ENCODE measurements at regions of chr10 and their contacts with region 1.

Region 1: DNA sequence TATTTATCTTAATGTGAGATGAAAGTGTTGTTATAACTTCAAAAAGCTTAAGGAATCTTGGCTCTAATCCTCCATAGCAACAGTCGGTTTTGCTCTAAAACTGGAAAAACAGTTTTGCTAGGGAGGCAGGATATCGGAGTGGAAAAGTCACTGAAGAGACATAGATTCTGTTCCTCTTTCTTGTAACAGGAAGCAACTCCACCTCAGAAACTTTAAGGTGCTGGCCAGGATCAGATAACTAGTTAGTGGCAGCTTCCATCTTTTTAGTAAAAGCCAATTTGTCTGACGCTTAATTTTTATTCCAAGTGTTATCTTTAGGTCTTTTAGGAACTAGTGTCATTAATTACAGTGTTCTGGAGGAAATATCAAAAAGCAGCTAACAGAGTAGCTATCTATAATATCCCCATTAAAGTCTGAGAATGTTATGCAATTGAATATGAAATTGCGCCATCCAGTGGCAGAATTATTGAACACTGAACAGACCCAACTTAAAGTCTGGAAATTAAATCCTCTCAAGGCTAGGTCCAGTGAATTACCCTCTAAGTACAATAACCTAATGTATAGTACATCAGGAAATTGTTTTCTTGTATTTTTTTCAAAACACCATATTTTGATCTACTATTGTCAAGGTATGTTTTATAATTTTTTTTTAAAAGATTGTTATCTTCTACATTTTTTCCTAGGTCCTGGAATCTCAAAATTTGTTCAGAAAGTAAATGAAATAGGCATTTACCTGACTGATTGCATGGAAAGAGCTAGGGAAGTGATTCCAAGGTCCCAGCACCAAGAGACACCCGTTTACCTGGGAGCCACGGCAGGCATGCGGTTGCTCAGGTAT is 65.9 kb upstream of the CC2D2B start:
- DNase-seq: peak; percentile 84
- H3K4me3 ChIP-seq: no peak overlapping the region
- H3K27ac ChIP-seq: peak overlapping the region; percentile 22
- H3K4me1 ChIP-seq: peaks cover 7% of the 10 kb centered on the region
- H3K27me3 ChIP-seq: no peaks in the 10 kb centered on the region
- CTCF ChIP-seq: peak; percentile 39 to 44
- POLR2A ChIP-seq: no peak

Region 2: GRCh38 chr10:95374597-95375209 is 467.2 kb before region 1 on chr10:
- CTCF ChIA-PET with region 1: interaction called, 17 read pairs
- POLR2A ChIA-PET with region 1: no interaction called
- dilution Hi-C with region 1: no loop called
- intact Hi-C with region 1: loop called (anchors 5 kb)
- DNase-seq: peak; percentile 50
- H3K4me3 ChIP-seq: no peak overlapping the region
- H3K27ac ChIP-seq: no peak overlapping the region
- H3K4me1 ChIP-seq: no peaks in the 10 kb centered on the region
- H3K27me3 ChIP-seq: peaks cover 0 to 7% of the 10 kb centered on the region in 2 experiments
- CTCF ChIP-seq: peak; percentile 83 to 91
- POLR2A ChIP-seq: no peak

Region 3: GRCh38 chr10:95706986-95707385 is 134.9 kb before region 1 on chr10:
- CTCF ChIA-PET with region 1: interaction called, 20 read pairs
- POLR2A ChIA-PET with region 1: no interaction called
- dilution Hi-C with region 1: no loop called
- intact Hi-C with region 1: no loop called
- DNase-seq: no peak
- H3K4me3 ChIP-seq: no peak overlapping the region
- H3K27ac ChIP-seq: no peak overlapping the region
- H3K4me1 ChIP-seq: no peaks in the 10 kb centered on the region
- H3K27me3 ChIP-seq: no peaks in the 10 kb centered on the region
- CTCF ChIP-seq: no peak
- POLR2A ChIP-seq: no peak

Region 4: DNA sequence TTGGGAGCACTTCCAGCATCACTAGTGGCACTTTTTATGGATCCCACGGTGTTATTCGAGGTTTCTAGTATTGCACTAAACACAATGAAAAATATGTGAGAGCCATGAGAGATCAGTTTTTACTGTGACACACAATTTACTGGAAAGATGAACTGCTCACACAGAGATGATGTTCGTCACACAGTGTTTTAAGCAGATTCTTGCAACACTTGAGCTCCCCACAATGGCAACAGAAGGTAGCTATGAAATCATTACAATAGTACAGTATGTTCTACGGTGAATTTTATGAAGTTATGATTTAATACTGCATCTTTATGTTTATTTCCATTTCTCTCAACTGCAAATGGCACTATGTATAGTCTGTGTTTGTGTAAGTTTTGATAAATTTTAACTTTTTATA is 113.4 kb before region 1 on chr10:
- CTCF ChIA-PET with region 1: interaction called, 30 read pairs
- POLR2A ChIA-PET with region 1: no interaction called
- dilution Hi-C with region 1: no loop called
- intact Hi-C with region 1: no loop called
- DNase-seq: peak; percentile 54
- H3K4me3 ChIP-seq: no peak overlapping the region
- H3K27ac ChIP-seq: no peak overlapping the region
- H3K4me1 ChIP-seq: peaks cover 15% of the 10 kb centered on the region
- H3K27me3 ChIP-seq: no peaks in the 10 kb centered on the region
- CTCF ChIP-seq: no peak
- POLR2A ChIP-seq: no peak

Region 5: DNA sequence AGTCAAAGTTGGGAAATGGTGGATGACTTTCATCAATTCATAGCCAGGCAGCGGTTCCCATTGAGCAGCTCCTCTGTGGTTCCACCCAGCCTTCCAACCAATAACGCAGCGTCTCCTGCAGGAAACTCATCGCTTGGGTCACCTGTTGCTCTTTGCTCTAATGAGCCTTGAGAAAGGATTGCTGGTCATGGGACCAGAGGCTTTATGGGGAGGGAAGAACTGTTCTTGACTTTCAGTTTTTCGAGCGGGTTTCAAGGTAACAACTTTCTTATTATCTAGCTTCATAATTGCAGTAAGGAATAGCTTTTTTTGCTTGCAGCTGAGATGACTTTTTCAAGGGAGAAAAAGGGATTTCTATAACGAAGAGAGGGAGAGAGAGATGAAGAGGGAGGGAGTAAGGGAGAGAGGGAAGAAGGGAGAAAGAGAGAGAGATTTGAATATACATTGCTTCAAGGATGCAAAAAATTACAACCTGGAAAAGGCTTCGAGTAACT is 86.3 kb before region 1 on chr10:
- CTCF ChIA-PET with region 1: interaction called, 19 read pairs
- POLR2A ChIA-PET with region 1: no interaction called
- dilution Hi-C with region 1: no loop called
- intact Hi-C with region 1: no loop called
- DNase-seq: peak; percentile 55
- H3K4me3 ChIP-seq: peak overlapping the region; percentile 13 to 31 (median 25)
- H3K27ac ChIP-seq: no peak overlapping the region
- H3K4me1 ChIP-seq: peaks cover 24% of the 10 kb centered on the region
- H3K27me3 ChIP-seq: no peaks in the 10 kb centered on the region
- CTCF ChIP-seq: no peak
- POLR2A ChIP-seq: no peak

Region 6: DNA sequence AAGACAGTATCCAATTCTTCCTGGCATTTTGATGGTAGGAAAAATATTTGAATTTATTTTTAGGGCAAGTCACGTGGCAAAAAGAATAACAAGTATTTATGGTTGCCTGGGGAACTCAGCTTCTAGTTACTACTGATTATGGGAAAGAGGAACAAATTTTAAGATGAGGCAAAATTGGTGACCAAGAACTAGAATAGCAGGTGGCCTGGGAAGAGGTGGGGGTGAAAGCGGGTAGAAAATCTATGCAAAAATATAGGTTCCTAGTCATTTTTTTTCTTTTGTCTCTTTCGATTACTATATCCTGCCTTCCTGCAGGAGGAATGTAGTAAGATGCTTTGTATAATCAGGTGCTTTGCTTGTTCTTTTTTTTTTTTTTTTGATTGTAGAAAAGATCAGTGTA is 58.1 kb before region 1 on chr10:
- CTCF ChIA-PET with region 1: interaction called, 16 read pairs
- POLR2A ChIA-PET with region 1: no interaction called
- dilution Hi-C with region 1: no loop called
- intact Hi-C with region 1: no loop called
- DNase-seq: no peak
- H3K4me3 ChIP-seq: no peak overlapping the region
- H3K27ac ChIP-seq: no peak overlapping the region
- H3K4me1 ChIP-seq: peaks cover under 1% of the 10 kb centered on the region
- H3K27me3 ChIP-seq: no peaks in the 10 kb centered on the region
- CTCF ChIP-seq: no peak
- POLR2A ChIP-seq: no peak

Region 7: GRCh38 chr10:95814011-95814727 is 27.7 kb before region 1 on chr10:
- CTCF ChIA-PET with region 1: interaction called, 30 read pairs
- POLR2A ChIA-PET with region 1: no interaction called
- dilution Hi-C with region 1: no loop called
- intact Hi-C with region 1: loop called (anchors 1 kb)
- DNase-seq: peak; percentile 76
- H3K4me3 ChIP-seq: no peak overlapping the region
- H3K27ac ChIP-seq: peak overlapping the region; percentile 41
- H3K4me1 ChIP-seq: peaks cover 46% of the 10 kb centered on the region
- H3K27me3 ChIP-seq: no peaks in the 10 kb centered on the region
- CTCF ChIP-seq: no peak
- POLR2A ChIP-seq: no peak

Region 8: DNA sequence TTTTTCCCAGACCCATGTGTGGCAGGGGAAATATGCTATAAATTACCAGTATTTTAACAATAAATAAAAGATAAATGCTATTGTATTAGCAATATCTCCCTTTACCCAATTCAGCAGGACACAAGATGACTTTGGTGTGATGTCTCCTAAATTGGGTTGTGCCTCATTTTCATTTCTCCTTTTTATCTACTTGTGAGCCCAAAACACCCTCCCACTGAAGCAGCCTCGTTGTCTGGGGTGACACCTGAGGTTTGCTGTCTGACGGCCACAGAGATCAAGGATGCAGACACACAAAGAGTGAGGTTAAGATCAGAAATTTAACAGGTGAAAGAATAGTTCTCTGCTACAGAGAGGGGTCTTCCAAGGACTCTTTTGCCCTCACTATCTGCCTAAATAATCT is 38.8 kb after region 1 on chr10:
- CTCF ChIA-PET with region 1: no interaction called
- POLR2A ChIA-PET with region 1: no interaction called
- dilution Hi-C with region 1: no loop called
- intact Hi-C with region 1: no loop called
- DNase-seq: no peak
- H3K4me3 ChIP-seq: no peak overlapping the region
- H3K27ac ChIP-seq: no peak overlapping the region
- H3K4me1 ChIP-seq: no peaks in the 10 kb centered on the region
- H3K27me3 ChIP-seq: no peaks in the 10 kb centered on the region
- CTCF ChIP-seq: no peak
- POLR2A ChIP-seq: no peak

Region 9: DNA sequence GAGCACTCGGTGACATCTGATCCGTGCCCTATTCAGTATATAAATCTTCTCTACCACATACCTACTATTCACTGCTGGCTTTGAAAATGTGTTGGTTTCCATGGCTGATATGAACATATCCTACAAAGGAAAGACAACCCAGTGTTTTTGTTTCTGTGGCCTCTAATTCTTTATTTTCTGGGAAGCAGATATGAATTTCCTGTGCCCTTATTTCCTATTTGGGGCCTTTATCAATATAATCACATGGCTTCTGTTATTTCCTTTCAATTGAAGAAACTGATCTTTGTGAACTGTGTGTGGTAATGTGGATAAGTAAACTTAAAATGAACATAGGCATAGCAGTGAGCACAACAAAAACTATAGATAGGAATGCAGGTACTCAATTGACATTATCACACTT is 212.1 kb after region 1 on chr10:
- CTCF ChIA-PET with region 1: no interaction called
- POLR2A ChIA-PET with region 1: no interaction called
- dilution Hi-C with region 1: no loop called
- intact Hi-C with region 1: no loop called
- DNase-seq: peak; percentile 92
- H3K4me3 ChIP-seq: peak overlapping the region in 1 of 3 experiments; percentile 15
- H3K27ac ChIP-seq: peak overlapping the region; percentile 74
- H3K4me1 ChIP-seq: peaks cover 44% of the 10 kb centered on the region
- H3K27me3 ChIP-seq: no peaks in the 10 kb centered on the region
- CTCF ChIP-seq: no peak
- POLR2A ChIP-seq: no peak